Right ventricle myocardium inferior (tissue), 1 donor: ENCODE measurements at regions of chr1 and their contacts with region 1.

Region 1: GRCh38 chr1:161225534-161226319 is at the start of gene TOMM40L:
- DNase-seq: peak; percentile 93
- ATAC-seq: peak; percentile 97
- total RNA-seq, gene TOMM40L: 39.1 TPM

Region 2: DNA sequence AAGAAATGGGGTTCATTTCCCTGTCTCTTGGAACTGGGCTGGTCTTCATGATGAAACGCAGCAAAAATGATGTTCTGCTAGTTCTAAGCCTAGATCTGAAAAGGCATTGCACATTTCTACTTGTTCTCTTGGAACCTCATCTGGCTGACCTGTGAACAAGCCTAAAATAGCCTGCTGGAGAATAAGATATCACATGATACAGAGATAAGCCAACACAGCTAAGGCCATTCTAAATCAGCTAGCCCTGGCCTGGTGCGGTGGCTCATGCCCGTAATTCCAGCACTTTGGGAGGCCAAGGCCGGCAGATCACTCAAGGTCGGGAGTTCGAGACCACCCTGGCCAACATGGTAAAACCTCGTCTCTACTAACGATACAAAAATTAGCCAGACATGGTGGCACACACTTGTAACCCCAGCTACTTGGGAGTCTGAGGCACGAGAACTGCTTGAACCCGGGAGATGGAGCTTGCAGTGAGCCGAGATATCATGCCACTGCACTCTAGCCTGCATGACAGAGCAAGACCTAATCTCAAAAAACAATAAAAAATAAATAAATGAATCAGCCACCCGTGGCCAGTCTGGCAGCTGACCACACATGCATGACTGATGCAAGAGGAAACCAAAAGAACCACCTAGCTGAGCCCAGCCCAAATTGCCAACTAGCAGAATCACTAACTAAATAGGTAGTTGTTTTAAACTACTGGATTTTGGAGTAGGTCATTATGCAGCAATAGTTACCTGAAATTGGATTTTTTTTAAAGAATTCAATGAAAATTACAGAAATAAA is 381.1 kb before region 1 on chr1:
- intact Hi-C with region 1: no loop called
- DNase-seq: no peak
- ATAC-seq: no peak

Region 3: GRCh38 chr1:161165742-161166668 is 59.7 kb before region 1 on chr1 and contains the start of gene PPOX:
- intact Hi-C with region 1: no loop called
- DNase-seq: peak; percentile 99
- ATAC-seq: peak; percentile 96
- total RNA-seq, gene PPOX: 13.5 TPM

Region 4: DNA sequence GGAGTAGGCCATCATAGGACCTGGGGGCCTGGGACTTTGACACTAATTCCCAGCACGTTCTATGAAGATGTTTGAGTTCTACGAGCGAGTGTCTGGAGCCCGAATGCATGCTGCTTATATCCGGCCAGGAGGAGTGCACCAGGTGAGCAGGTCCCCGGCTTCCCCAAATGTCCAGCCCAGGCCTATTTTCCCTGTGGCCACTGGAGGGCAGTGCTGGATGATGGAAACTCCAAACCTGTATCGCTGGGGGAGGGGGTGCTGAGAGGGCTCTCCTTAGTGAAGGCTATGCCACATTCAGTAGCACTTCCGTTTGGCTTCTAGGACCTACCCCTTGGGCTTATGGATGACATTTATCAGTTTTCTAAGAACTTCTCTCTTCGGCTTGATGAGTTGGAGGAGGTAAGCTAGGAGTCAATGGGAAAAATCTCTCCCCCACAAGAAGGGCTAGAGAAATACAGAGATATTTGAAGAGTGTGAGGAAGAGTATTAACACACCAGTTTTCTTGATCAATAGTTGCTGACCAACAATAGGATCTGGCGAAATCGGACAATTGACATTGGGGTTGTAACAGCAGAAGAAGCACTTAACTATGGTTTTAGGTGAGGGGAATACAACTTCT is 15.8 kb before region 1 on chr1:
- intact Hi-C with region 1: loop called (anchors 2 kb)
- DNase-seq: peak; percentile 87
- ATAC-seq: peak; percentile 44

Region 5: DNA sequence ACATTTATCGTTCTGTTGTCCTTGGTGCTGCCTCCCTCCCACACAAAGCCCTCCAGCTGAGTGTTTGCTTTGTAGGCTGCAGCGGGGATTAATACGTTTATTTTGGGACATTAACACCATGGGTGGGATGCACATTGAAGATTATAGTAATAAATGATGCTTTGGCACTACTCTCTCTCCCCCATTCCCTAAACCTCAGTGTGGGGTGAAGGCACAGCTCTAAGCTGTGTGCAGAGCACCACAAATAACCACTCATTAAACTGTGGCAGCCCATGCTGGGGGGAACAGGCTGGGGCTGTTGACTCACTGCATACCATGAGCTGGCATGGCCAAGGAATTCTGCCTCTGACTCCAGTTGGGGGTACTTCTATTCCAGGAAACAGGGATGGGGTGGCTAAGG is 40.5 kb after region 1 on chr1:
- intact Hi-C with region 1: no loop called
- DNase-seq: no peak
- ATAC-seq: no peak

Region 6: DNA sequence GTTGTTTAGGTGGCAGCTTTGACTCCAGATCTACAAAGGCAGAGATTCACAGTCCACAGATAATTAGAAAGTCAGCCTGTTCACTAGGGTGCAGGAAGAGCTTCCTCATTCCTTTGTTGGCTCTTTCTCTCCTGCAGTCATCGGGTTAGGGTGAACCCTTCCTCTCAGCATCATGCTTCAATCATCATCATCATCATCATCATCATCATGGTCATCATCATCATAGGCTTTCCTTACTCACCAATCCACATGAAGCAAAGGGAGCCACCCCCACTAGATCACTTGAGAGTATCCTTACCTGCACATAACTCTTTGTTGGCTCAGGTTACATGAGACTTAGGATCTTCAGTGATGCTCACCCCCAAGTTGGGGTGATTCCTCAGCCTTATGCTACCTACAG is 65.1 kb after region 1 on chr1:
- intact Hi-C with region 1: loop called (anchors 1 kb)
- DNase-seq: no peak
- ATAC-seq: no peak

Region 7: GRCh38 chr1:161314201-161314981 is 88.7 kb after region 1 on chr1 and contains the start of gene SDHC:
- intact Hi-C with region 1: loop called (anchors 2 kb)
- DNase-seq: peak; percentile 95
- ATAC-seq: peak; percentile 99
- total RNA-seq, gene SDHC: 407 TPM

Region 8: GRCh38 chr1:161367684-161368400 is 142.1 kb after region 1 on chr1 and contains the start of gene CFAP126:
- intact Hi-C with region 1: loop called (anchors 5 kb)
- DNase-seq: peak; percentile 70
- ATAC-seq: peak; percentile 95
- total RNA-seq, gene CFAP126: not detected

Region 9: GRCh38 chr1:161382214-161383019 is 156.7 kb after region 1 on chr1:
- intact Hi-C with region 1: loop called (anchors 2 kb)
- DNase-seq: no peak
- ATAC-seq: peak; percentile 79

Region 10: DNA sequence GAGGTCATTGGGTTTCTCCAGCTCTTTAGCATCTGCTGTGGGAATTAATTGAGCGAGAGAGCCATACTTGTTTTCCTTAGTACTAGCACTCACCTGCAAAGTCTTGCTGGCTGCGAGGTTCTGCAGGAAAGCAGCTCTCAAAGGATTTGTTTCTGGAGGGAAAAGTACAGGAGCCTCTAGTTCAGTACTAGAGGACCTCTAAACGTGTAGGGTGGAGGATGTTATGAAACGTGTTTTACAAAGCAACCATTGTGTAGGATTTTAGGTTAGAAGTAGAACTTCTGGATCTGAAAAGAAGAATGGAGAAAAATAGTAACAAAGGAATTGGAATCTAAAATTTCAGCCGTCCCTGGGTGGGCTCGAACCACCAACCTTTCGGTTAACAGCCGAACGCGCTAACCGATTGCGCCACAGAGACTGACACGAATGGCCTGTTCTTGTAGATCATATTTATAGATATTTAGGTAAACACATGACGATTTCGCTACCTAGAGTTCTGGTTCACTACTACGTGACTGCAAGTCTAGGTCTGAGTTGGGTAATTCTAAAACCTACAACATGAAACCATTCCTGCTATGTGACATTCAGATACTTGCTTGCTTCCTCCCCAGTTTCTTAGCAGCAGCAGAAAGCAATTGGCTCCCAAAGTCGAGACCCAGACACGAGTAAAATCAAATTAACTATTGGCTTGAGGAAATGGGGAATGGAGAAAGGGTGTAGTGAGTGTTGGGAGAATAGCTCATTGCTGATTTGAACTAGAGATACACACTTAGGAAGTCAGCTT is 202.2 kb after region 1 on chr1:
- intact Hi-C with region 1: no loop called
- DNase-seq: no peak
- ATAC-seq: no peak